Right ventricle myocardium inferior (tissue), 1 donor: ENCODE measurements at regions of chr2 and their contacts with region 1.

Region 1: DNA sequence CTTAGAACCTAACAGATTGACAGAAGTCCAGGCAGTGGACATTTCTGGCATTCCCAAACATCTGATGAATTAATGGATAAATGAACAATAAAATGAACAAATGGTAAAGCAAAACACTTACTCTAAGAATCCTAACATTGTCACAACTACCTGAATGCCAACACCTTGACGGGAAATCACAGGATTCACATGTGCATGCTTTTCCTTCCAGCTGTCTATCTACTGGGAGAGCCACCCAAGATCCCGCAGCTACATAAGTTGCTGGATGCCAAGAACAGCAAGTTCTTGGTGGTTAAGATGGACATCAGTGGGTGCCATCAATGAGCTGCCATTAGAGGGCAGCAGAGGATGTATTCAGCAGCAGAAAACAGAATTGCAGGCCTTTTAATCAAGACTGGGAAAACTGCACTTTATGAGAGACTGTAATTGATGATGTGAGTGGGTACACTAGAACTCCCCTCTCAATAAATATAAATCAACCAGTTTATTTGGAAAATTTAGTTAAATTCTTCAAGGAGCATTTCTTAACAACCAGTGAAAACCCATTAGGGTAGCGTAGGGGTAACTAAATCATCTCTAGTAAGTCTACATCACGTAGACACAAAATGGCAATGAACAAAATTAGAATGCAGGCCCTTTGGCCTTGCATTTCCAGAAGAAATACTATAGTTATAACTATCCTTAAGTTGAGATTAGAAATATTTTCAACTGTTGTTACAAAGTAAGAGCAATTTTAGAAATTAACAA is 45.6 kb downstream of the SESTD1 start:
- DNase-seq: peak; percentile 66
- ATAC-seq: peak; percentile 91

Region 2: DNA sequence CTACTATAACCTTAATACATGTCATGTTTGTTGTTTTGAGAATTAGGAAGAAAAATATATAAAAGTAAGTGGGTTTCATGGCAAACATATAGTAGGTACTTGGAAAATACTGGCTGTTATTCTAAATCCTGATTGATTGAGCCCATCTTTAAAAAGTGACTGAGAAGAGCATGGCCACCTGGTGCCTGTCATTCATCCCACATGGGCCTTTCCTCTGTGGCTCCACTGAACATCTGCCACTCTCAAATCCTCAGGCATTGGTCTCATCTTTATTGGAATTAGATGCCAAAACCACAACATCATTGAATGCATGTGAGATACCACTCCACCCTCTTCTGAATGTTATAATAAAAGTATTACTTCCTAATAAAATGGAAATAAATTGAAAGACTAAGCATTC is 310.2 kb before region 1 on chr2:
- intact Hi-C with region 1: no loop called
- DNase-seq: no peak
- ATAC-seq: no peak

Region 3: DNA sequence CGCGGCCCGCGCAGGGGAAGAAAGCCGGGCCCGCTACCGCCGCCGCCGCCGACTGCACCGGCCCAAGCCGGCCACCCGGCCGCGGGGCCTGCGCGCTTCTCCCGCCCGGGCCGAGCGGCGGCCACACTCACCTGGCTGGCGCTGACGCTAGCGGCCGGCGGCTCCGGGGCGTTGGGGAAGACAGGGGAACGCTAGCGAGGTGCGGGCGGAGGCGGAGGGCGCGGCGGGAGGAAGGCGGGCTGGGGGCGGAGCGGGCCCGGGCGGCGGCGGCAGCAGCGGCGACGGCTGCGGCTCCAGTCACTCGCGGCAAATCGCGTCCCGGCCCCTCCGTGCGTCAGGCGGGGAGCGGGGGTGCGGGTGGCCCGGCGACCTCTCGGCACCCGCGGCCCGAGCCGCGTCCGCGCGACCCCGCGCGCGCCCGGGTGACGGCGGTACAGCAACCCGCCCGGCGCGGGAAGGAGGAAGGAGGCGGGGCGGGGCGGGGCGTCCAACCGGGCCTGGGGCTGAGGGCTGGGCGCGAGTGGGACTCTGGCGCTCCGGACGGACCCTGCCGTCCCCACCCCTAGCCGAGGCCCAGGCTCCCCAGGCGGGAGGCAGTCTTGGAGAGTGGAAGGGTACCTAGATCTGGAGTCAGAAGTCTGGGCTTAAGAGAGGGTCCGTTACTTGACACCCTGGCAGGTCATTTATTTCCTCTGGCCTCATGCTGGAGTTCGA is 45.5 kb after region 1 on chr2 and contains the start of gene SESTD1:
- intact Hi-C with region 1: loop called (anchors 5 kb)
- DNase-seq: peak; percentile 91
- ATAC-seq: peak; percentile 84
- total RNA-seq, gene SESTD1: 40.5 TPM

Region 4: DNA sequence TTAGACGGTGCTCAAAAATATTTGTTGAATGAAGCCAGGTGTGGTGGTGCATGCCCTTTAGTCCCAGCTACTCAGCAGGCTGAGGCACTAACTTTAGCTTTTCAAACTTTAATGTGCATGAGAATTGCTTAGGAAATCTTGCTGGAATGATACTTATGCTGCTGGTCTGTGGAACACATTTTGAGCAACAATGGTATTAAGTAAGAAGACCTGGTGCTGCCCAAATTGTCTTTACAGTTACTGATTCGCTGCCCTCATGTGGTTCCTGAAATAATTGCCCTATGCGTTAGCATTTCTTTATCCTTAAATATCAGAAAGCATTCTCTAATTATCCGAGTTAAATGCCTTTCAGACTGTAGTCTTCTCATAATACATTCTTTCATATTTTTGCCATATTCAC is 121.6 kb after region 1 on chr2:
- intact Hi-C with region 1: loop called (anchors 5 kb)
- DNase-seq: no peak
- ATAC-seq: peak; percentile 35

Region 5: DNA sequence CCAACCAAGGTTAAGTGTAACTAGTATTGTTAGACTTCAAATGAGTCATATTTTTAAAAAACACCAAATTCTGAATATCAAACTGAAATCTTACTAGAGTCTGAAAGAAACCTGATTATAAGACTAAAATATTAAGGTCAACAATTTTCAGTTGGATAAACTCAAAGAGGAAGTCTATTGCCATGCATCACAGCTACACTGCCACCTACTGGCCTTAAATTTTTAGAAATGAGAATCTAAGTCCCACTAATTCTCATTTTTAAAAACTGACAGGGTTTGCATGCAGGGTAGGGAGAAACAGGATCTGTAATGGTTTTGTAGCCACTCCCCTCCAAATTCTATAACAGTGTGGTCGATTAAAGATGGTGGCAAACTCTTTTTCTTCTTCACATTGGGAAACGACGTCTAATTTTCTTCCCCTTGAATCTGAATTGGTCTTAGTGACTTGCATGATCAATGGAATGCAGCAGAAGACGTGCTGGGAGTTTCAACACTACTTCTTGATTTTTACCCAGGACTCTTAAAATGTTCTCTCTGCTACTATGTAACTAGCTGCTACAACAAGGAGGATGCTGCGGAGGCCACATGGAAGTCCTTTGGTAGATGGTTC is 221.7 kb after region 1 on chr2:
- intact Hi-C with region 1: loop called (anchors 10 kb)
- DNase-seq: no peak
- ATAC-seq: no peak